ENCODE measurements at regions of chr3 and their contacts with region 1.

Region 1: DNA sequence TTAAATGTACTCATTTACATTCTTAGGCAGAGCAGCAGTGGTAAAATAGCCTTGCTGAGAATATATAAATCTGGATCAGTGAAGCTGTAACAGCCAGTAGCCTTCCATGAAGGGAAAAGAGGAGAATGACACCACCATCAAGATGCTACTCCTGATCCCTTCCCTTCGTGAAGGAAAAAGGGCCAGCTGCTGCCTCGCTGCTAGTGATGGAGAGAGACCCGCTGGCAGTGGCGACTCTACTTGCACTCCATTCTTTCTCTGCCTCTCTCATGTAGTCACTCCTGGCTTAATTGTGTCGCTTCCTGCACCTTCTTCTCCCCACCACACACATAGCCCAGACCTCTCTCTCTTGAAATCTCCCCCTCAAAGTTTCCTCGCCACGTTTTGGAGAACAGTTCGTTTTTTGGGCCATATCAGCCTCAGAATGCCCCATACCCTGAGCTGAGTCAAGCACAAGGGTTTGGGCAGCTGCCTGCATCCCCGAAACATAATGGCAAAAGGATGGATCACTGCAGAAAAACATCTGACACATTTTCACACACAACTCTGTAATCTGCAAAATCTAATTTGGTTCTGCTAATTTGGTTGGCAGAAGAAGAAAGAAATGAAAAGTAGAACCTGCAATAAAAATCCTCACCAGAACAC is 460.3 kb upstream of the IL12A start:
- DNase-seq: no peak
- ATAC-seq: no peak
- H3K4me3 ChIP-seq: no peak overlapping the region
- H3K27ac ChIP-seq: no peak overlapping the region
- H3K4me1 ChIP-seq: no peaks in the 10 kb centered on the region
- H3K27me3 ChIP-seq: no peaks in the 10 kb centered on the region
- CTCF ChIP-seq: no peak
- EP300 ChIP-seq: no peak
- POLR2A ChIP-seq: no peak
- RAD21 ChIP-seq: no peak

Region 2: DNA sequence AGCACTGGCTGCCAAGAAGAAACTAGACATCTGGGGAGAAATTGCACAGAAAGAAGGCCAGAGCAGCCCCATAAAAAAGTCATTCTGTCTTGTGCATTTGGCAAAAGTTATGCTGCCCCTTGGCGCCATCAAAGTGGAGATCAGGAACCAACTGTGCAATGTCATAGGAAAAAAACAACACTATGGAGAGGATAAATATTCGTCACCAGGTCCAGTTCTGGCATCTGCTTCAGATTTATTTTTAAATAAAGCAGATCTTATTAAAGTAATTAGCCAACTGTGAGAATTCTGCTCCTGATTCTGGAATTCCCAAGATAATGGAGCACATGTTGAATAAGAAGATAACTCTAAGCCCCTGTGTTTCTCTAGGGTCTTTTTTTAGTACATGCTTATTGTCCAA is 39.8 kb before region 1 on chr3:
- CTCF ChIA-PET with region 1: no interaction called
- POLR2A ChIA-PET with region 1: no interaction called
- RAD21 ChIA-PET with region 1: no interaction called
- SMC1A ChIA-PET with region 1: no interaction called
- in situ Hi-C with region 1: no loop called
- intact Hi-C with region 1: loop called (anchors 1 kb)
- DNase-seq: no peak
- ATAC-seq: no peak
- H3K4me3 ChIP-seq: no peak overlapping the region
- H3K27ac ChIP-seq: no peak overlapping the region
- H3K4me1 ChIP-seq: no peaks in the 10 kb centered on the region
- H3K27me3 ChIP-seq: no peaks in the 10 kb centered on the region
- CTCF ChIP-seq: no peak
- EP300 ChIP-seq: no peak
- POLR2A ChIP-seq: no peak
- RAD21 ChIP-seq: no peak

Region 3: GRCh38 chr3:159634483-159634882 is 106.1 kb after region 1 on chr3:
- CTCF ChIA-PET with region 1: no interaction called
- POLR2A ChIA-PET with region 1: no interaction called
- RAD21 ChIA-PET with region 1: no interaction called
- SMC1A ChIA-PET with region 1: no interaction called
- in situ Hi-C with region 1: no loop called
- intact Hi-C with region 1: no loop called
- DNase-seq: no peak
- ATAC-seq: no peak
- H3K4me3 ChIP-seq: no peak overlapping the region
- H3K27ac ChIP-seq: no peak overlapping the region
- H3K4me1 ChIP-seq: no peaks in the 10 kb centered on the region
- H3K27me3 ChIP-seq: no peaks in the 10 kb centered on the region; a peak in 1 of 4 replicates
- CTCF ChIP-seq: no peak
- EP300 ChIP-seq: no peak
- POLR2A ChIP-seq: no peak
- RAD21 ChIP-seq: no peak

Measured in GM12878 (cell line).